ENCODE measurements at regions of chr7 and their contacts with region 1.

Region 1: DNA sequence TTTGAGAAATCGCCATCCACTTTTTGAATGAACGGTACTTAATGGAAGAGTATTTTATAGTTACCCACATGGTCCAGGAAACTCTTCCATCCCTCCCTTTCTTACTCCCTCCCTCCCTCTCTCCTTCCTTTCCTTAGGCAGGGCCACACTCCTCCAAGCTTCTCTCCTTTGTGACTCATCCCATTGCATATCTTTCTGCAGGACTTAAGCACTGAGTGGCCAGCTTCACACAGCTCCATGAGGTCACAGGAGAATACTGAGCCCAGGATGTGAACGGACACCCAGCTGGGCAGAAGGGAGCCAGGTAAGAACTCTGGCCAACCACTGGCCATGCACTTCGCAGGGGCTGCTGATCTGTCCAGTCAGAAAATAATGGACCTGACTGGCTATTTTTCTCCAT is 189.7 kb upstream of the ADCY1 start:
- DNase-seq: no peak
- ATAC-seq: no peak
- H3K4me3 ChIP-seq: no peak overlapping the region
- H3K27ac ChIP-seq: no peak overlapping the region
- H3K4me1 ChIP-seq: no peaks in the 10 kb centered on the region
- H3K27me3 ChIP-seq: no peaks in the 10 kb centered on the region
- CTCF ChIP-seq: no peak

Region 2: DNA sequence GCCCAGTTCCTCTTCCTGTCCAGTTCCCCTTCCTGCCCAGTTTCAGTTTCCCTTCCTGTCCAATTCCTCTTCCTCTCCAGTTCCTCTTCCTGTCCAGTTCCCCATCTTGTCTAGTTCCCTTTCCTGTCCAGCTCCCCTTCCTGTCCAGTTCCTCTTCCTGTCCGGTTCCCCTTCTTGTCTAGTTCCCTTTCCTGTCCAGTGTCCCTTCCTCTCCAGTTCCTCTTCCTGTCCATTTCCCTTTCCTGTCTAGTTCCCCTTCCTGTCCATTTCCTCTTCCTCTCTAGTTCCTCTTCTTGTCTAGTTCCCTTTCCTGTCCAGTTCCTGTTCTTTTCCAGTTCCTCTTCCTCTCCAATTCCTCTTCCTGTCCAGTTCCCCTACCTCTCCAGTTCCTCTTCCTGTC is 121.6 kb after region 1 on chr7:
- intact Hi-C with region 1: loop called in 1 of 2 experiments (anchors 10 kb)
- DNase-seq: no peak
- ATAC-seq: no peak
- H3K4me3 ChIP-seq: no peak overlapping the region
- H3K27ac ChIP-seq: no peak overlapping the region
- H3K4me1 ChIP-seq: no peaks in the 10 kb centered on the region
- H3K27me3 ChIP-seq: no peaks in the 10 kb centered on the region
- CTCF ChIP-seq: no peak

Measured in psoas muscle (tissue), 8 donors.